Dendritic cell treated with granulocyte-macrophage colony-stimulating factor and Interleukin-4, amounts not matched to agents 40 ng/mL and 50 ng/mL, for 4 days (primary cell): ENCODE measurements at regions of chr15 and their contacts with region 1.

Region 1: DNA sequence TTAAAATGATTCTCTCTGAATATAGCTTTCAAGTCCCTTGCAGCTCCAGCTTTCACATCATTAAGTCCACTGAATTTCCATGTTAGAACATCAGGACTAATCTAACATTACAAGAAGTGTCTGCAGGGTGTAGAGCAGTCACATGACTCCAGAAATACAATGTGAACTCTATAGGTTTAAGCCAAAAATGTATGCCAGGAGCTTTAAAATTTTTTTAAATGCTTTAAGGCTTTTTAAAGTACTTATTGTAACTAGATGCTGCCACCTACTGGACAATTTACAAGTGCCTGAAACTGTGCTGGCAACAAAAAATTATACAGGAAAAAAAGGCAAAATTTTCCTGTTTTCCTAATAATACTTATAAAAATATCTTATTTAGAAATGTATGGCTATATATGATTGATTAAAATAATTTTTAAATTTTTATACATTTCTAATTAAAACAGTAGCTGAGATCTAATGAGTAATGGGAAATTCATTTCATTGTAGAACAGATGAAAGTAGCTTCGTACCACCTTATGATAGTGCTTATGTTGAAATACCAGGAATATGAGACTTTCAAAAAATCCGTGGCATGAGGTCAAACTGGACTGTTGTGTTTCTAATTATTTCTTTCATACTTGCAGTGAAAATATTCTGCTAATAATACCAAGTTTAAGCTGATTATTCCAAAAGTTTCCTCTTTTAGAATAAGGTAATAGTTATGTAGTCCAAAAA is 25.7 kb downstream of the FSIP1 start:
- H3K4me3 Mint-ChIP-seq: no peak overlapping the region
- H3K27ac Mint-ChIP-seq: no peak overlapping the region
- H3K4me1 Mint-ChIP-seq: no peaks in the 10 kb centered on the region
- H3K27me3 Mint-ChIP-seq: peaks cover 7% of the 10 kb centered on the region

Region 2: GRCh38 chr15:38707802-38708671 is 1048.9 kb before region 1 on chr15:
- intact Hi-C with region 1: loop called (anchors 2 kb)
- H3K4me3 Mint-ChIP-seq: no peak overlapping the region
- H3K27ac Mint-ChIP-seq: no peak overlapping the region
- H3K4me1 Mint-ChIP-seq: no peaks in the 10 kb centered on the region
- H3K27me3 Mint-ChIP-seq: no peaks in the 10 kb centered on the region

Region 3: DNA sequence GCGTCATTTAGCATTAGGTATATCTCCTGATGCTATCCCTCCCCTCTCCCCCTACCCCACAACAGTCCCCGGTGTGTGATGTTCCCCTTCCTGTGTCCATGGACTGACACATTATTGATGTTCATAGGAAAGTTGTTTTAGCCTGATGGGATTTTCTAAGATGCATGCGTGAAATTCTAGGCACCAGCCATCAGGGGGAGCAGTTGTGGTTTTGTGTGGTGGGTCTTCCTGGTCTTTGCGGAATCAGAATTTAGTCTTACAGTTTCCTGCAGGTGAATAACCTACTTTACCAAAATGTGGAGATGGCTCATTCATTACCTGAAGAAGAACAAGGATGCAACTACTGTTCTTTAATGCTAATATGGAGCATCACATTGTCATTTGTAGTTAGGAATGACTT is 631.1 kb before region 1 on chr15:
- intact Hi-C with region 1: loop called (anchors 10 kb)
- H3K4me3 Mint-ChIP-seq: no peak overlapping the region
- H3K27ac Mint-ChIP-seq: no peak overlapping the region
- H3K4me1 Mint-ChIP-seq: no peaks in the 10 kb centered on the region
- H3K27me3 Mint-ChIP-seq: peaks cover 3% of the 10 kb centered on the region

Region 4: GRCh38 chr15:39312984-39313383 is 444.0 kb before region 1 on chr15:
- intact Hi-C with region 1: loop called (anchors 10 kb)
- H3K4me3 Mint-ChIP-seq: no peak overlapping the region
- H3K27ac Mint-ChIP-seq: no peak overlapping the region
- H3K4me1 Mint-ChIP-seq: peaks cover 6% of the 10 kb centered on the region
- H3K27me3 Mint-ChIP-seq: peaks cover 1% of the 10 kb centered on the region

Region 5: DNA sequence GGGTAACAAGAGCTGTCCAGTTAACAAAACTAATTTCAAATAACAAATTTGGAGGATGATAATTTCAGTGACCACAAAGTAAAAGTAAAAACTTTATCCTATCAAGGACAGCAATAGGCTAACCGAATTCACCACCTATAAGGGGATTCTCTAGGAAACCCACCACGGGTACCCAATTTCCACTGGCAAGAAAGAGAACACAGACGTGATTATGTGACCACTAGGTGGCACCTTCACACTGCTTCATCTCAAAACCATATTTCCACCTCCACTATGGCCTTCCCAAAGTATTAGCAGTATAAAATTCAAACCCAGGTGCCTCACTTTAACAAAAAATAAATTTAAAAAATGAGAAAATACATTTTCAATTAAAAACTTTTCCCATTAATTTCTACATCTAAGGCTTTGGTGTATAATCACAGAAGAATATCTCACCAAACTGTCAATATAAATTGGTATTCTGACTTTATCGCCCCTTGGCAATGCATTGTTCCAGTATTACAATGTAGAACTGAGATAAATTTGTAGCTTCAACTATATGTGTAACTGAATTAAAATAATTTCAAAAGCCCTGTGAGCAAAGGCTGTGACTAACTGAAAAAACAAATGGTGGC is 70.9 kb before region 1 on chr15:
- intact Hi-C with region 1: loop called (anchors 1 kb)
- H3K4me3 Mint-ChIP-seq: no peak overlapping the region
- H3K27ac Mint-ChIP-seq: no peak overlapping the region
- H3K4me1 Mint-ChIP-seq: no peaks in the 10 kb centered on the region
- H3K27me3 Mint-ChIP-seq: no peaks in the 10 kb centered on the region